HEK293 (cell line): ENCODE measurements at regions of chr6 and their contacts with region 1.

Region 1: GRCh38 chr6:42928986-42929820 is at the start of gene CNPY3:
- H3K4me3 ChIP-seq: peak within 1 kb of the TSS; percentile 66
- H3K27ac ChIP-seq: peak within 1 kb of the TSS; percentile 85
- H3K4me1 ChIP-seq: peaks cover 3% of the 10 kb centered on the region; the same call in 1 of the 2 replicates
- CTCF ChIP-seq: peak; percentile 17; the same call in 1 of the 2 replicates

Region 2: GRCh38 chr6:42841844-42842584 is 87.2 kb before region 1 on chr6:
- CTCF ChIA-PET with region 1: no interaction called
- POLR2A ChIA-PET with region 1: no interaction called
- H3K4me3 ChIP-seq: no peak overlapping the region
- H3K27ac ChIP-seq: no peak overlapping the region
- H3K4me1 ChIP-seq: no peaks in the 10 kb centered on the region
- CTCF ChIP-seq: no peak

Region 3: GRCh38 chr6:42879372-42880239 is 49.6 kb before region 1 on chr6 and contains the start of gene RPL7L1:
- CTCF ChIA-PET with region 1: no interaction called
- POLR2A ChIA-PET with region 1: interaction called, 11 read pairs
- H3K4me3 ChIP-seq: peak within 1 kb of the TSS; percentile 95
- H3K27ac ChIP-seq: peak within 1 kb of the TSS; percentile 99
- H3K4me1 ChIP-seq: no peaks in the 10 kb centered on the region
- CTCF ChIP-seq: peak; percentile 63

Region 4: GRCh38 chr6:42901536-42901957 is 27.7 kb before region 1 on chr6:
- CTCF ChIA-PET with region 1: interaction called, 15 read pairs
- POLR2A ChIA-PET with region 1: no interaction called
- H3K4me3 ChIP-seq: no peak overlapping the region
- H3K27ac ChIP-seq: no peak overlapping the region
- H3K4me1 ChIP-seq: no peaks in the 10 kb centered on the region; the same call in 1 of the 2 replicates
- CTCF ChIP-seq: peak; percentile 85

Region 5: DNA sequence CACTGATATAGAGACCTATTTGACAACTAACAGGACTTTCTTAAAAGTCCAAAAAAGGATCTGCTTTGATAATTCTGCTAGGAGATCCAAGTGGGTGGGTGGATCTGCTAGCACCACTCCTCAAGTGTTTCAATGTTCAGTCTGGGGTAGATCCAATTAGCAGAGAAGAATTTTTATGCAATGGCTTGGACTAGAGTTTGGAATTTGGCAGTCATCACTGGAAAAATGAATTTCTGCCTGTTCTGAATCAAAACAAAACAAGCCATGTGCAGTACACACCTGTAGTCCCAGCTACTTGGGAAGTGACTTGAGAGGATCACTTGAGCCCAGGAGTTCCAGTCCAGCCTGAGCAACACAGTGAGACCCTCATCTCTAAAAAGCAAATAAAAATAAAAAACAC is 18.7 kb after region 1 on chr6:
- CTCF ChIA-PET with region 1: interaction called, 3 read pairs
- POLR2A ChIA-PET with region 1: interaction called, 10 read pairs
- H3K4me3 ChIP-seq: no peak overlapping the region
- H3K27ac ChIP-seq: no peak overlapping the region
- H3K4me1 ChIP-seq: no peaks in the 10 kb centered on the region
- CTCF ChIP-seq: no peak

Region 6: DNA sequence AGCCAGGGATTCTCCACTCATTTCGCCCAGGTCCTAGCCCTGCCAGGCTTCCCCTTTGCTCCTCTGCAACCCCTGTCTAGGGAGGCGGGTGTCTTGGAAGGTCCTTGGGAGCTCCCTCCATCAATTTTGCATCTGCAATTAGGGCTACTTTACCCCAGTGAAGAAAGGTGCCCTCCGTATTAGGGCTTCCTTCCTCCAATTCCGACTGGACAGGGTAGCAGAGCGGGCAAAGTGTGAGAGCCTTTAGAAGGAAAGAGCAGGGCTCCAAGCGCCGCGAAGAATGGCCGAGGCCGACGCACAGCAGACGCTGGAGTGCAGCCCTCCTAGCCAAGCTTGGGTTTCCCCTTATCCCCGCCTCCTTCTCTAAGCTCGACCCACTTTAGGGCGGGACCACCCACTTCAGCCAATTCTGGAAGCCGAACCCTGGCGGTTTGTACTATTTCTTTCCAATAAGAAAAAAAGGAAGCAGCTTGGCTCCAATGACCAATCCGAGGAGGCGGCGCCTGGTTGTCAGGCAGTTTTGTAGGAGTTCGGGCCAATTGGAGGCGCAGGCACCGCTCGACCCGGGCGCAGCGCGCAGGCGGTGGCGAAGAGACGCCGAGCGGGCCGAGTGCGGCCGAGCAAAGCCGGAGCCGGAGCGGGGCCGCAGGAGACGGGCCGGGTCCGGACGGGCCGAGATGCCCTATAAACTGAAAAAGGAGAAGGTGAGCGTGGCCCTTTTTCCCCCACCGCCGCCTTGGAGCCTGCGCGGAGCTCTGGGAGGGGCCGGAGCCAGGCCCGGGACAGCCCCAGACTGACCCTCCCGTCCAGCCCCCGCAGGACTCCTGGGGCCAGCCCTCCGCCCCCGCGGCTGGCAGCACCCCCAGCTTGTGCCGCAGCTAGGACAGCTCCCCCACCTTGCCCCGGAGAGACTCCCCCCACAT is 55.1 kb after region 1 on chr6 and contains the start of gene PPP2R5D:
- CTCF ChIA-PET with region 1: no interaction called
- POLR2A ChIA-PET with region 1: interaction called, 48 read pairs
- H3K4me3 ChIP-seq: peak within 1 kb of the TSS; percentile 83
- H3K27ac ChIP-seq: peak within 1 kb of the TSS; percentile 53; the same call in 1 of the 2 replicates
- H3K4me1 ChIP-seq: no peaks in the 10 kb centered on the region
- CTCF ChIP-seq: no peak

Region 7: GRCh38 chr6:43021270-43022047 is 92.3 kb after region 1 on chr6 and contains the start of gene RRP36:
- CTCF ChIA-PET with region 1: no interaction called
- POLR2A ChIA-PET with region 1: interaction called, 15 read pairs
- H3K4me3 ChIP-seq: peak within 1 kb of the TSS; percentile 91
- H3K27ac ChIP-seq: peak within 1 kb of the TSS; percentile 86
- H3K4me1 ChIP-seq: peaks cover 9% of the 10 kb centered on the region
- CTCF ChIP-seq: no peak

Region 8: DNA sequence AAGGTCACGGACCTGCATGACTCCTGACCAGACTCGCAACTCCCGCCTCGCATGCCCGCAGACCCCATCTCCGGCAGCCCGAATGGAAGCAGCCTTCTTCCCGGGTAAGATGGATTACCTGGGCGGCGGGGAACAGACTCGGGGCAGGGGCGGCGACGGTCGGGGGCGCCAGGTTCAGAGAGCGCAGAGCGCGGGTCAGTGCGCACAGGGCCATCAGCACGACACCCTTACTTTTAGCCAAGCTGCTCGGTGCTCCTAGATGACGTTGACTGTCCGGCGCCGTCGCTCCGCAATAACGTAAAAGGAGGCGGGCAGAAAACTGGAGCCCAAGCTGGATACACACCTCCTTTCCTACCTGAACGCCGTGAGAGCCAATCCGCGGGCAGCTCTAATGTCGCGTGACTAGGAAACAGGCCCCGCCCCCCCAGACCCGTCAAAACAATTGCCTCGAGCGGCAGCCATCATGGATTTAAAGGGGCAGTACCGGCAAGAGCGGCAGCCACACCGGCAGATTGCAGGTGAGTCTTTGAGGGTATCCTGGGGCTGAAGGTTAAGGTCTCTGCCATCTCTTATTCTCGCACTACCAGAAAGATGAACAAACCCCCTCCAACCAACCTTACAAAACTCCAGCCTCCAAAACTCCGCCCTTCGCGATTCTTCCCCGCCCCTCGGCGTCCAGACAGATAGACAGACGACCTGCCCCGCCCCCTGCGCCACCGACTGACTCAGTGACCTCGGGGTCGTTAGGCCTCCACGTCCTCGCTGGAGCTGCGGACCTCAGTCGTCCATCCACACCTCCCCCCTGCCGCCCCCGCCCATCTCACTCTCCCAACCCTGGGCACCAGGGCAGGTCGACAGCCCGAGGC is 130.2 kb after region 1 on chr6 and contains the starts of genes KLC4 and MRPL2:
- CTCF ChIA-PET with region 1: no interaction called
- POLR2A ChIA-PET with region 1: interaction called, 20 read pairs
- H3K4me3 ChIP-seq: peak within 1 kb of the TSS; percentile 96
- H3K27ac ChIP-seq: peak within 1 kb of the TSS; percentile 76
- H3K4me1 ChIP-seq: peaks cover 9% of the 10 kb centered on the region
- CTCF ChIP-seq: no peak

Region 9: DNA sequence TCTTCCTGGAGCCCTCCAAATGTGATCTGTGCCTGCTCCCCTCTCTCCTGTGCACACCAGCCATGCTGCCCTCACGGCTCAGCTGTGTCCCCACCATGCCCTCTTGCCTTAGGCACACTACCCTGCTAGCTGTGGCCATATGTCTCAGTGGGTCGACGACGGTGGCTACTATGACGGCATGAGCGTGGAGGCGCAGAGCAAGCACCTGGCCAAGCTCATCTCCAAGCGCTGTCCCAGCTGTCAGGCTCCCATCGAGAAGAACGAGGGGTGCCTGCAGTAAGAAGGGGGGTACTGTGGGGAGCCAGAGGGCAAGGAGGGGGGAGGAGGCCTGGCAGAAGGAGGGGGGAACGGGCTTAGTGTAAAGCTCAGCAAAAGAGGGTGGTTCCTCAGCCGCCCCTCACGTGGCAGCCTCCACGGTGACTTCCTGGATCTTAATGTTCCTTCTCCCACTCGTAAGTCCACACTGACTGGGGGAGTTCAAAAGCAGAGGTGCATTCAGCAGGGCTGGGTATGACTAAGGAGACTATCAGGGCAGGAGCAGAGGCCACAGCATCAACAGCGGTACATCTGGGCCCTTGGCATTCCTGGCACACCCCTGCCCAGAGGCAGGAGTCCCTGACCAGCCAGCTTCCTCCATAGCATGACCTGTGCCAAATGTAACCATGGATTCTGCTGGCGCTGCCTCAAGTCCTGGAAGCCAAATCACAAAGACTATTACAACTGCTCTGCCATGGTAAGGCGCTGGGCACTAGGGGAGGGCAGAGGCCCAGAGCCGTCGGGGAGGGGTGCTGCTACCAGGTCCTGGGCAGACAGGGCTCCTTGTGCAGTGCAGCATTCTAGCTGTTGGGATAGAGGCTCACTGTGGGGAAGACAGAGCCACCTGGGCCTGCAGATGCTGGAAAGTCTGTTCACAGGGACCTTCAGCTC is 292.1 kb after region 1 on chr6:
- CTCF ChIA-PET with region 1: no interaction called
- POLR2A ChIA-PET with region 1: no interaction called
- H3K4me3 ChIP-seq: no peak overlapping the region
- H3K27ac ChIP-seq: no peak overlapping the region
- H3K4me1 ChIP-seq: no peaks in the 10 kb centered on the region
- CTCF ChIP-seq: no peak